ENCODE measurements at regions of chr10 and their contacts with region 1.

Region 1: GRCh38 chr10:96642973-96643372 is 56.2 kb upstream of the TM9SF3 start:
- ATAC-seq: peak in 4 of 8 experiments; percentile 22 to 81 (median 51)
- H3K4me3 ChIP-seq: no peak overlapping the region
- H3K27ac ChIP-seq: no peak overlapping the region
- H3K4me1 ChIP-seq: peaks cover 18 to 27% of the 10 kb centered on the region in 2 donors

Region 2: GRCh38 chr10:96743988-96744585 is 101.1 kb after region 1 on chr10:
- in situ Hi-C with region 1: loop called in 1 of 9 experiments (anchors 25 kb)
- ATAC-seq: peak; percentile 48 to 85 (median 65)
- H3K4me3 ChIP-seq: no peak overlapping the region
- H3K27ac ChIP-seq: no peak overlapping the region
- H3K4me1 ChIP-seq: no peaks in the 10 kb centered on the region

Region 3: DNA sequence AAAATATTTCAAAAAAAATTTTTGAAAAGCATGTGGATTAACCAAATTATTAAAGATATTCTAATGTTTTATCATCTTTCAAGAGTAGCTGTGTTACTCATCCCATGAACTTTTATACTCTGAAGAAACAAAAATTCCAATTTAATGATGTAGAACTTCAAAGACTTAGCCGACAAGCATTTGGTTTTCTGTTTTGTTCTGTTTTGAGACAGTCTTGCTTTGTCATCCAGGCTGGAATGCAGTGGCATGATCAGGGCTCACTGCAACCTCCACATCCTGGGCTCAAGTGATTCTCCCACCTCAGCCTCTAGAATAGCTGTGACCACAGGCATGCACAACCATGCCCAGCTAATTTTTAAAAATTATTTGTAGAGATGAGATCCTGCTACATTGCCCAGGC is 171.3 kb after region 1 on chr10:
- in situ Hi-C with region 1: loop called in 2 of 9 experiments (anchors 10 to 25 kb)
- ATAC-seq: no peak
- H3K4me3 ChIP-seq: no peak overlapping the region
- H3K27ac ChIP-seq: no peak overlapping the region
- H3K4me1 ChIP-seq: no peaks in the 10 kb centered on the region